ENCODE measurements at regions of chr9 and their contacts with region 1.

Region 1: DNA sequence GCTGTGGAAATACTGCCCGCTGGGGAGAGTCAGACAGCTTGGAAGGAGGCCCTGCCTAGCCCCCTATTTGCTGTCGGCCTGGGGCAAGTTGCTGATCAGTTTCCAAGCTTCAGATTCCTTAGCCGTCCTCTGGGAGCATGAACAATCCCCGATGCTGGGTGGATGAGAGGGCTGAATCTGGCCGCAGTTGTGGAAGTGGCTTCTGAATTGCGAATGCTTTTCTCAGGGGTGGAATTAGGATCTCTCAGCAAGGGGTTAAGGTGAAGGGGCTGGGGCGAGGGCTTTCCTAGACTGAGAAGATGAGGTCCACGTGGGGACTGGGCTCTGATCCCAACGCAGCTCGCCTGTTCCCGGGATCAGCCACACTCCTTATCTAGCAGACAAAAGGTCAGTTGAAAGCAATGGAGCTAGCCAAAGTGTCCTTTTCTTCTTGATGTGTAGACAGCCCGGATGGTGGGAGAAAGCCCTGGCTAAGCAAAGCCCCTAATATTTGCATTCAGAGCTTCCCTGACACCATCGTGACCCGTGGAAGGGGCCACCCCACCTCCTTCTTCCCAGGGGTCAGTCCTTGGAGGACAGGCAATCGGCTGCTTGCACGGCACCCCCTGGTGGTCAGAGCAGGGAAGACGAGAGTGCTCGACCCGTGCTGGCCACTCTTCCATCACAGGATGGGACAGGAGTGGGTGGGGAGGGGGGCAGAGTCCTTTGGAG is 54.9 kb downstream of the COL15A1 start:
- DNase-seq: peak; percentile 68
- ATAC-seq: peak; percentile 73
- H3K4me3 Mint-ChIP-seq: no peak overlapping the region
- H3K27ac Mint-ChIP-seq: no peak overlapping the region
- H3K4me1 Mint-ChIP-seq: peaks cover 35% of the 10 kb centered on the region
- H3K27me3 Mint-ChIP-seq: peaks cover 25% of the 10 kb centered on the region

Region 2: DNA sequence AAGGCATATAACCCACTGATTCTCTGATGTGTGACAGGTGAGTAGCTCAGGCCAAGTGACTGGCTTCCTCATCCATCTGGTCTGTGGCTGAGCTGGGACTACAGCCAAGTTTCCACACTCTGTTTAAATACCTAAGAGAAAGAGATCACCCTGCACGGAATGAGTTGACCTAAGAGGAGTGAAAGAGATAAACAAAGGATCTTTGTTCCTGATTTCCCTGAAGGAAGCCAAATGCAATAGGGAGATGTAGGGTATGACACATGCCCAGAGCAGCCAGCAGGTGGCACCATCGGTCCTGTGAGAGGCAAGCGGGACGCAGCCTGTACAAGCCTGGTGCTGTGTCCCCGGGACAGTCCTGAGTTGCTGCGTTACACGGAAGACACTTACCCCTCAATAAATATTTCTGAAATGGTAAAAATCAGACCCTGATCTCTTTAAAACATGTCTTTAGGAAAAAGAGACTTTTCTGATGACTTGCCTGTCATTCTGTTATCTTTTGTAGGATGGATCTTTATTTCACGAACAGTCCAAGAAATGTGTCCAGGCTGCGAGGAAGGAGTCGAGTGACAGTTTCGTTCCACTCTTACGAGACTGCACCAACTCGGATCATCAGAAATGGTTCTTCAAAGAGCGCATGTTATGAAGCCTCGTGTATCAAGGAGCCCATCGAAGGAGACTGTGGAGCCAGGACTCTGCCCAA is 150.0 kb before region 1 on chr9:
- CTCF ChIA-PET with region 1: interaction called, 79 read pairs
- POLR2A ChIA-PET with region 1: no interaction called
- DNase-seq: peak; percentile 86
- ATAC-seq: peak; percentile 95
- H3K4me3 Mint-ChIP-seq: no peak overlapping the region
- H3K27ac Mint-ChIP-seq: no peak overlapping the region
- H3K4me1 Mint-ChIP-seq: peaks cover 9% of the 10 kb centered on the region
- H3K27me3 Mint-ChIP-seq: no peaks in the 10 kb centered on the region

Region 3: GRCh38 chr9:99012942-99013512 is 14.4 kb after region 1 on chr9:
- CTCF ChIA-PET with region 1: interaction called, 41 read pairs
- POLR2A ChIA-PET with region 1: no interaction called
- DNase-seq: peak; percentile 38
- ATAC-seq: peak; percentile 49
- H3K4me3 Mint-ChIP-seq: peak overlapping the region; percentile 63
- H3K27ac Mint-ChIP-seq: peak overlapping the region; percentile 99
- H3K4me1 Mint-ChIP-seq: peaks cover 37% of the 10 kb centered on the region
- H3K27me3 Mint-ChIP-seq: no peaks in the 10 kb centered on the region

Region 4: GRCh38 chr9:99092643-99093491 is 94.3 kb after region 1 on chr9:
- CTCF ChIA-PET with region 1: interaction called, 12 read pairs
- POLR2A ChIA-PET with region 1: no interaction called
- DNase-seq: peak; percentile 86
- ATAC-seq: peak; percentile 88
- H3K4me3 Mint-ChIP-seq: peak overlapping the region; percentile 66
- H3K27ac Mint-ChIP-seq: peak overlapping the region; percentile 98
- H3K4me1 Mint-ChIP-seq: peaks cover 81% of the 10 kb centered on the region
- H3K27me3 Mint-ChIP-seq: no peaks in the 10 kb centered on the region

Region 5: GRCh38 chr9:99118782-99119466 is 120.3 kb after region 1 on chr9:
- CTCF ChIA-PET with region 1: interaction called, 14 read pairs
- POLR2A ChIA-PET with region 1: no interaction called
- DNase-seq: peak; percentile 80
- ATAC-seq: peak; percentile 99
- H3K4me3 Mint-ChIP-seq: peak overlapping the region; percentile 72
- H3K27ac Mint-ChIP-seq: peak overlapping the region; percentile 93
- H3K4me1 Mint-ChIP-seq: peaks cover 87% of the 10 kb centered on the region
- H3K27me3 Mint-ChIP-seq: no peaks in the 10 kb centered on the region